MCF 10A (cell line): ENCODE measurements at regions of chr14 and their contacts with region 1.

Region 1: GRCh38 chr14:89416002-89416995 is 734 bp downstream of the FOXN3 start:
- DNase-seq: peak; percentile 98
- H3K4me3 Mint-ChIP-seq: peak overlapping the region; percentile 90
- H3K27ac Mint-ChIP-seq: peak overlapping the region; percentile 82
- H3K4me1 Mint-ChIP-seq: peaks cover 20% of the 10 kb centered on the region
- H3K27me3 Mint-ChIP-seq: no peaks in the 10 kb centered on the region
- CTCF ChIP-seq: no peak

Region 2: DNA sequence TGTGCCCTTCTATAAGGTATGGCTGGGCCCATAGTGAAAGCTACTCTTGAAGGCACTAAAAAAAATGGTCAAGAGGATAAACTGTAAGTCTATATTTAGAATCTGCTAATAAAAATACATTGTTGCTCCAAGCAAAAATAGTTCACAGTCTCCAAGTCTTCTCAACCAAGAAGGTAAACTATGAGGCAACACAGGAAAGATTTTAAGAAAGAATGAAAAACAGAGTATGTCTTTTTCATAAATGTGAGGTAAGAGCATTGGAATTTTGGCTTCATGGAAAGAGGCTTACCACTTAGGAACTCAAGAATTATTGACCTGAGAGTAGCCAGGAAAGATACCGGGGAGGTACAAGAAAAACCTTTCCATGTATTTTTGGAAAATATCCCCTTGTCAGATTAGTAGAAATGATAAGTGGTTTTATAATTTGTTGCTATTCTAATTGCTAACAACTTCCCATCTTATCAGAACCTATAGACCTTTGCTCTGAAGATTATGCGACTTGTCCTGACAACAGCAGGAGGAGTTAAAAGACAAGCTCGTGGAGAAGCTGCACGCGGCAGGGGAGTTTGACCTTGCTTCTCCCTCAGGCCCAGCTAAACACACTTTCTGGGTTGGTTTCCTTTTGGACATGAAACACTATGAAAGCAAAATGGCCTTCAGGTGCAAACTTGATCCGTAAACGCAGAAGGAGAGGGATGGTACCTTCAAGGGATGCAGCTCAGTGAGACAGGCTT is 237.3 kb before region 1 on chr14:
- CTCF ChIA-PET with region 1: no interaction called
- POLR2A ChIA-PET with region 1: no interaction called
- intact Hi-C with region 1: loop called (anchors 5 kb)
- DNase-seq: no peak
- H3K4me3 Mint-ChIP-seq: no peak overlapping the region
- H3K27ac Mint-ChIP-seq: no peak overlapping the region
- H3K4me1 Mint-ChIP-seq: no peaks in the 10 kb centered on the region
- H3K27me3 Mint-ChIP-seq: no peaks in the 10 kb centered on the region
- CTCF ChIP-seq: no peak

Region 3: DNA sequence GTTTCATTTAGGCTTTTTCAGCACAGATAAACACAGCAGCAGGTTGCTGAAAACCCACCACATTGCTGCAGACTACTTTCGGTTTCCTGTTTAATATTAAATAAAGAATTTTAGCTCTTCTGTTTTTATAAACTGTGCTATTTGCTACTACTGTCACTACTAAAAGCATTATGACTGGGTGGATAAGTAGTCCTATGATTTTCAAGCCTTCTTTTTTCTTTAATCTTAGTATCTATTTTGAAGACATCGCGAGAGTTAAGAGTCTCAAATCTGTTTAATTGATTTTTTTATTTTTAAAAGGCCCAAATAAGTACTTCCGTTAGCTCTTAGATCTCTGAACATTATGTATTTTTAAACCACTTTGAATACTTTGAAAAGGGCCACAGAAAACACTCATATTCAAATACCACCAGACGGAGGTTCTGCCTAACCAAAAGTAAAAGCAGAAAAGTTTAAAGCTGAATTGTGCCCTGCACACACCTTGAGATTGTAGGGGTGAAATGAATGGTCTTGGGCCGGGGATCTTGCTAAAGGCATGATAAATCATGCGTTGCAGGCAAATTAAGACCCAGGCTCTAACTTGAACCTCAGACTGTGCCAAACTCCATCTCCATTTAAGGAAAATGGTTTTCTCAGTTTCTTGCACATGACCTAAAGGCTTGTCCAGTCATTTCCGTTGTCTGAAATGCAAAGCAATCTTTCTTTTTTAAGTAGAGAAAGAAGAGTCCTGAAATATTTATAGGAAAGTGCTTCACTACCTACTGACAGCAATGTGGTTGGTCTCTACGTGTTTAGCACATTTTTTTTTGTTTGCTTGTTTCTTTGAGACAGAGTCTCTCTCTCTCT is 14.3 kb after region 1 on chr14:
- CTCF ChIA-PET with region 1: interaction called, 4 read pairs
- POLR2A ChIA-PET with region 1: interaction called, 13 read pairs
- intact Hi-C with region 1: no loop called
- DNase-seq: peak; percentile 33
- H3K4me3 Mint-ChIP-seq: peak overlapping the region; percentile 56
- H3K27ac Mint-ChIP-seq: peak overlapping the region; percentile 88
- H3K4me1 Mint-ChIP-seq: peaks cover 35% of the 10 kb centered on the region
- H3K27me3 Mint-ChIP-seq: no peaks in the 10 kb centered on the region
- CTCF ChIP-seq: no peak

Region 4: DNA sequence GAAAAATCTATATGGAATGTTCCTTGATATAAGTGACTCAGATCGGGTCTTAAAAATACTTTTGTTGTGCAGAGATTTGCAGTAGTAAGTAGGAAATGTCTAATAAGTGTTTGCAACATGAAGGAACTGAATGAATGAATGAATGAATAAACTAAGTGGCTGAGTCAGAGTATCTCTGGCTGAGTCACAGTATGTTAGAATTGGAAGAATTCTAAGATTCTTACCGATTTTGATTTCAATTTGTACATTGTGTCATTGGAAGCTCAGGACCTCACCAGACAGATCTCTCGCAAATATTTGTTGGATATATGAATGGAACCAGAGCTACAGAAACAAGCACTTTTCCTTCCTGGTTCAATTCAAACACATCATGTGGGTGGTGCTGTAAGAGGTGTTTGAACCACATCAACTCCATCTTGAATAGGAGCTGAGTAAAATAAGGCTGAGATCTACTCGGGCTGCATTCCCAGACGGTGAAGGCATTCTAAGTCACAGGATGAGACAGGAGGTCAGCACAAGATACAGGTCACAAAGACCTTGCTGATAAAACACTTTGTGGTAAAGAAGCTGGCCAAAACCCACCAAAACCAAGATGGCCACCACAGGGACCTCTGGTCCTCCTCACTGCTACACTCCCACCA is 124.7 kb after region 1 on chr14:
- CTCF ChIA-PET with region 1: no interaction called
- POLR2A ChIA-PET with region 1: interaction called, 3 read pairs
- intact Hi-C with region 1: loop called (anchors 5 kb)
- DNase-seq: peak; percentile 29
- H3K4me3 Mint-ChIP-seq: no peak overlapping the region
- H3K27ac Mint-ChIP-seq: no peak overlapping the region
- H3K4me1 Mint-ChIP-seq: peaks cover 11% of the 10 kb centered on the region
- H3K27me3 Mint-ChIP-seq: no peaks in the 10 kb centered on the region
- CTCF ChIP-seq: no peak

Region 5: GRCh38 chr14:89767861-89768268 is 351.6 kb after region 1 on chr14:
- CTCF ChIA-PET with region 1: interaction called, 3 read pairs
- POLR2A ChIA-PET with region 1: interaction called, 3 read pairs
- intact Hi-C with region 1: loop called (anchors 2 kb)
- DNase-seq: peak; percentile 51
- H3K4me3 Mint-ChIP-seq: no peak overlapping the region
- H3K27ac Mint-ChIP-seq: no peak overlapping the region
- H3K4me1 Mint-ChIP-seq: no peaks in the 10 kb centered on the region
- H3K27me3 Mint-ChIP-seq: peaks cover 7% of the 10 kb centered on the region
- CTCF ChIP-seq: peak; percentile 66

Region 6: GRCh38 chr14:89915114-89915878 is 499.0 kb after region 1 on chr14:
- CTCF ChIA-PET with region 1: no interaction called
- POLR2A ChIA-PET with region 1: interaction called, 8 read pairs
- intact Hi-C with region 1: loop called (anchors 5 kb)
- DNase-seq: peak; percentile 78
- H3K4me3 Mint-ChIP-seq: no peak overlapping the region
- H3K27ac Mint-ChIP-seq: no peak overlapping the region
- H3K4me1 Mint-ChIP-seq: no peaks in the 10 kb centered on the region
- H3K27me3 Mint-ChIP-seq: no peaks in the 10 kb centered on the region
- CTCF ChIP-seq: peak; percentile 91